Activated T-helper 2 cell treated with anti-CD3 and anti-CD28 coated beads, Interferon-gamma antibody, Interleukin-2, Interleukin-4, amounts not matched to agents 10 μg/mL and 5 μg/mL and 100 μg/mL, durations not matched to agents 14 hours and 24 hours and 36 hours (primary cell): ENCODE measurements at regions of chr22 and their contacts with region 1.

Region 1: DNA sequence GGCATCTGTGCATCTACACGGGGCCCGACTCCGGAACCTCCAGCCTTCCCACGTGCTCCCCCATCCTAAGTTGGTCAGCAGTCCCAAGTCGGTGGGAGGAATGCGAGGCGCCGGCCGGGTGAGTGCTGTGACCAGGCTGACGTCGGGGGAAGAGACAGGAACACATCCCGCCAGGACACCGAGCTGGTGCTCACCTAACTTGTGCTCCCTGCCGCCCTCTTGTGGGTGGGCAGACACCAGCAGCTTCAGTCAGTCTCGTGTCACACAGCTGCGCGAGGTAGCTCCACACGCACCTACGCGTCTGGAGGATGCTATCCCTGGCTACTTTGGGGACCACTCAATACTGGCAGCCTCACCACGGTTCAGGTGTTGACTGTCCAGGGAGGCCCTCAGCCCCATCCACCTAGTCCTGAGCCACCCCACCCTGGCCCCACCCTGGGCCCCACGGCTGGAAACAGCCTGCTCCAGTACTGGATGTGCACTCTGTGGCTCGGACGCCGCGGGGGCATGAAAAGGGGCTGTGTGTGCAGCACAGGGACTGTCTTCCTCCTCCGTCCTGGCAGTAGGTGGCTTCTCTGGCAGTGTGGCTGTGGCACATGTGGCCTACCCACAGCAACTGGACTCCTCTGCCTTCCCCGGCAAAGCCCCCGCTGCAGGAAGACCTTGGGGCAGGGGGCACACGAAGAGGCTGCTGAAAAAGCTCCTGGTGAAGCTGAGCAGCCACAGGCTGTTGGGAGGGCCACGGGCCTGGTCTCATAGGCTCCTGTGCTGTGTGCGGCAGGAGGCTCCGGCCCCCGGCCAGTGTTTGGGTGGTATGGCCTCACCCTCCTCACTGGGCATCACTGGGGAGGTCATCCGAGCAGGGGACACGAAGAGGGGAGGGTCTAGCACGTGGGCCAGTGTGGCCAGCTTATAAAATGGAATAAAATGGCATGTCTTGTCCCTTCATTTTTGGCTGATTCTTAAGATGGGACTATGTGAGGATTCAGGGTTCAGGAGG is 11.2 kb upstream of the BID start:
- DNase-seq: peak; percentile 44
- H3K4me3 Mint-ChIP-seq: no peak overlapping the region
- H3K27ac Mint-ChIP-seq: no peak overlapping the region
- H3K4me1 Mint-ChIP-seq: peaks cover 8% of the 10 kb centered on the region
- H3K27me3 Mint-ChIP-seq: peaks cover 5% of the 10 kb centered on the region

Region 2: GRCh38 chr22:17734187-17734586 is 51.3 kb before region 1 on chr22:
- intact Hi-C with region 1: loop called (anchors 2 kb)
- DNase-seq: no peak
- H3K4me3 Mint-ChIP-seq: no peak overlapping the region
- H3K27ac Mint-ChIP-seq: peak overlapping the region; percentile 74
- H3K4me1 Mint-ChIP-seq: peaks cover 20% of the 10 kb centered on the region
- H3K27me3 Mint-ChIP-seq: no peaks in the 10 kb centered on the region

Region 3: GRCh38 chr22:17742527-17742902 is 43.0 kb before region 1 on chr22:
- intact Hi-C with region 1: loop called (anchors 1 kb)
- DNase-seq: peak; percentile 44
- H3K4me3 Mint-ChIP-seq: no peak overlapping the region
- H3K27ac Mint-ChIP-seq: no peak overlapping the region
- H3K4me1 Mint-ChIP-seq: no peaks in the 10 kb centered on the region
- H3K27me3 Mint-ChIP-seq: no peaks in the 10 kb centered on the region

Region 4: DNA sequence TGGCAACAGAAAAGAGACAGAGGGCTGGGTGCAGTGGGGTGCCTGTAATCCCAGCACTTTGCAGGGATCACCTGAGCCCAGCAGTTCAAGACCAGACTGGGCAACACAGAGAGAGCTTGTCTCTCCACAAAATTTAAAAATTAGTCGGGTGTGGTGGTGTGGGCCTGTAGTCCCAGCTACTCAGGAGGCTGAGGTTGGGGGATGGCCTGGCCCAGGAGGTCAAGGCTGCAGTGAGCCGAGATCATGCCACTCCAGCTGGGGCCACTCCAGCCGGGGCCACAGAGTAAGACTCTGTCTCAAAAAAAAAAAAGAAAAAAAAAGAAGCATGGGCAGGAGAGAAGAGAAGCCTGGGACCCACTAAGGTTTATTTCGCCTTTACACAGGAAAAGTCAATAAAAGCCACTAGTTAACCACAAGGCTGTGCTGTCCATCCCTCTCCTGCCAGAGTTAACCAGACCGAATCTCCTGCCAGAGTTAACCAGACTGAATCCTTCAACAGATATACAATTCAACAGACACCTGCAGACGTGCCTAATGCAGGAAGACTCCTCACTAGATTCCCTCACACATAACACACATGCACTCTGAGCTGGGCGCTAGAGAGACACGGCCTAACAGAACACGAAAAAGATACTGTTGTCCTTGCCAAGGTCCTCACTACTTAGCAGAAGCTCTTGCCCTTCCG is 209.1 kb after region 1 on chr22:
- intact Hi-C with region 1: no loop called
- DNase-seq: no peak
- H3K4me3 Mint-ChIP-seq: no peak overlapping the region
- H3K27ac Mint-ChIP-seq: no peak overlapping the region
- H3K4me1 Mint-ChIP-seq: peaks cover 31% of the 10 kb centered on the region
- H3K27me3 Mint-ChIP-seq: no peaks in the 10 kb centered on the region